ENCODE measurements at regions of chr19 and their contacts with region 1.

Region 1: GRCh38 chr19:5904352-5905113 is at the start of gene VMAC:
- DNase-seq: peak; percentile 100
- ATAC-seq: peak; percentile 81 to 88
- H3K4me3 ChIP-seq: peak within 1 kb of the TSS; percentile 68 to 100 (median 97)
- H3K27ac ChIP-seq: peak within 1 kb of the TSS; percentile 93 to 98 (median 94)
- H3K4me1 ChIP-seq: peaks cover 10 to 20% of the 10 kb centered on the region in 2 donors
- H3K27me3 ChIP-seq: no peaks in the 10 kb centered on the region
- CTCF ChIP-seq: no peak
- POLR2A ChIP-seq: peak in 1 of 2 donors; percentile 5
- total RNA-seq, gene VMAC: 0.46 to 3.0 (median 2.1) TPM

Region 2: GRCh38 chr19:5790573-5791520 is 113.7 kb before region 1 on chr19 and contains the start of gene DUS3L:
- in situ Hi-C with region 1: no loop called
- intact Hi-C with region 1: loop called (anchors 1 kb)
- DNase-seq: peak; percentile 96 to 98
- ATAC-seq: peak; percentile 95 to 96
- H3K4me3 ChIP-seq: peak within 1 kb of the TSS; percentile 78 to 94 (median 86)
- H3K27ac ChIP-seq: peak within 1 kb of the TSS; percentile 96 to 99 (median 98)
- H3K4me1 ChIP-seq: peaks cover 7 to 8% of the 10 kb centered on the region in 2 donors
- H3K27me3 ChIP-seq: peaks cover 0 to 4% (median 0%) of the 10 kb centered on the region in 3 donors
- CTCF ChIP-seq: peak in 1 of 5 experiments; percentile 24
- POLR2A ChIP-seq: peak; percentile 72 to 73
- total RNA-seq, gene DUS3L: 19.5 to 45.9 (median 25.0) TPM

Region 3: DNA sequence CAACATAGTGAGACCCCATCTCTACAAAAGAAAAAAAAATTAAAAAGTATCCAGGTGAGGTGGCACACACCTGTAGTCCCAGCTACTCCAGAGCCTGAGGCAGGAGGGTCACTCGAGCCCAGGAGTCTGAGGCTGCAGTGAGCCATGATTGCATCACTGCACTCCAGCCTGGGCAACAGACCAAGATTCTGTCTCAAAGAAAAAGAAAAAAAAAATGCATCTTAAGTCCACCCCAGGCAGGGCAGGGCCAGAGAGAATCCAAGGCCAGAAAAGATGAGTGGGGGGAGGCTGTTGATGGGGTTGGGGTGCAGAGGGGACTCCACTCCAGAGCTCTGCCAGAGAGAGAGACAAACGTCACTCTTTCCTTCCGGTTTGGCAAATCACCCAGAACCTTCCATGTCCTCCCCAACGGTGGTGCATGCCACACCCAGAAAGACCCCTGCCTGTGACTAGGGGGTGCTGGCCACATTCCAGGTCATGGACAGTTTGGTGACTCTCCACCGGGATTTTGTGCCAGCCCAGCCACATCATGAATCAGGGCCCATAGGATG is 53.7 kb before region 1 on chr19:
- in situ Hi-C with region 1: no loop called
- intact Hi-C with region 1: no loop called
- DNase-seq: no peak
- ATAC-seq: no peak
- H3K4me3 ChIP-seq: no peak overlapping the region
- H3K27ac ChIP-seq: no peak overlapping the region
- H3K4me1 ChIP-seq: no peaks in the 10 kb centered on the region
- H3K27me3 ChIP-seq: peaks cover 0 to 9% (median 3%) of the 10 kb centered on the region in 3 donors
- CTCF ChIP-seq: no peak
- POLR2A ChIP-seq: no peak

Region 4: DNA sequence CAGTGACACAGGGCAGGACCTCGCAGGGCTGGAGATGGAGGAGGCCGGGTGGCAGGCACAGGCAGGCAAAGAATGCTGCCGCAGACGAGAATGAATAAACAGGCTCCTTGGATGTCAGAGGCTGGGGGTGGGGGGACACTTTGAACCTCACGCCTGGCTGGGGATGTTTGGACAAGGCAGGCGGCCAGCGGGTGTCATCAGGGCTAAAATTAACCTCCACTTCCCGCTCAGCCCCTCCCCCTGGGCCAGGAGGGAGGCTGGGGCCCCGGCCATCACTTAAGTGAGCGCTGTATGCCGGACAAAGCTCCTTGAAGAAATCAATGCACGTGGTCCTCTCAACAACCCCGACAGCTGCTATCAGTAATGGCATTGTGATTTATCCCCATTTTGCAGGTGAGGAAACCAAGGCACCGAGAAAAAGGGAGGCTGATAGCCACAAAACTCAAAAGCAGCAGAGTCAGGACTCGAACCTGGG is 23.9 kb before region 1 on chr19:
- in situ Hi-C with region 1: no loop called
- intact Hi-C with region 1: no loop called
- DNase-seq: peak in 1 of 2 donors; percentile 12
- ATAC-seq: peak; percentile 44 to 52
- H3K4me3 ChIP-seq: no peak overlapping the region
- H3K27ac ChIP-seq: no peak overlapping the region
- H3K4me1 ChIP-seq: peaks cover 8 to 9% of the 10 kb centered on the region in 2 donors
- H3K27me3 ChIP-seq: peaks cover 0 to 20% (median 5%) of the 10 kb centered on the region in 3 donors
- CTCF ChIP-seq: no peak
- POLR2A ChIP-seq: no peak

Region 5: GRCh38 chr19:6092329-6093286 is 188.1 kb after region 1 on chr19:
- in situ Hi-C with region 1: no loop called
- intact Hi-C with region 1: no loop called
- DNase-seq: peak; percentile 50 to 62
- ATAC-seq: peak; percentile 46 to 61
- H3K4me3 ChIP-seq: peak overlapping the region in 3 of 4 donors; percentile 26 to 45 (median 32)
- H3K27ac ChIP-seq: peak overlapping the region; percentile 29 to 67 (median 49)
- H3K4me1 ChIP-seq: peaks cover 0 to under 1% of the 10 kb centered on the region in 2 donors
- H3K27me3 ChIP-seq: peaks cover 0 to 2% (median 0%) of the 10 kb centered on the region in 3 donors
- CTCF ChIP-seq: no peak
- POLR2A ChIP-seq: no peak